B cell (primary cell): ENCODE measurements at regions of chr5 and their contacts with region 1.

Region 1: GRCh38 chr5:102130386-102130785 is 165.7 kb downstream of the SLCO4C1 start:
- DNase-seq: no peak
- ATAC-seq: no peak
- H3K4me3 ChIP-seq: no peak overlapping the region
- H3K4me3 Mint-ChIP-seq: no peak overlapping the region
- H3K27ac ChIP-seq: no peak overlapping the region
- H3K27ac Mint-ChIP-seq: no peak overlapping the region
- H3K4me1 ChIP-seq: no peaks in the 10 kb centered on the region
- H3K4me1 Mint-ChIP-seq: no peaks in the 10 kb centered on the region
- H3K27me3 ChIP-seq: no peaks in the 10 kb centered on the region
- H3K27me3 Mint-ChIP-seq: no peaks in the 10 kb centered on the region
- CTCF ChIP-seq: no peak

Region 2: GRCh38 chr5:102153003-102153759 is 22.8 kb after region 1 on chr5:
- CTCF ChIA-PET with region 1: no interaction called
- POLR2A ChIA-PET with region 1: no interaction called
- intact Hi-C with region 1: loop called (anchors 1 kb)
- DNase-seq: peak; percentile 21
- ATAC-seq: peak; percentile 33
- H3K4me3 ChIP-seq: no peak overlapping the region
- H3K4me3 Mint-ChIP-seq: peak overlapping the region; percentile 61
- H3K27ac ChIP-seq: no peak overlapping the region
- H3K27ac Mint-ChIP-seq: no peak overlapping the region
- H3K4me1 ChIP-seq: no peaks in the 10 kb centered on the region
- H3K4me1 Mint-ChIP-seq: no peaks in the 10 kb centered on the region
- H3K27me3 ChIP-seq: no peaks in the 10 kb centered on the region
- H3K27me3 Mint-ChIP-seq: no peaks in the 10 kb centered on the region
- CTCF ChIP-seq: peak; percentile 68